ENCODE measurements at regions of chr17 and their contacts with region 1.

Region 1: DNA sequence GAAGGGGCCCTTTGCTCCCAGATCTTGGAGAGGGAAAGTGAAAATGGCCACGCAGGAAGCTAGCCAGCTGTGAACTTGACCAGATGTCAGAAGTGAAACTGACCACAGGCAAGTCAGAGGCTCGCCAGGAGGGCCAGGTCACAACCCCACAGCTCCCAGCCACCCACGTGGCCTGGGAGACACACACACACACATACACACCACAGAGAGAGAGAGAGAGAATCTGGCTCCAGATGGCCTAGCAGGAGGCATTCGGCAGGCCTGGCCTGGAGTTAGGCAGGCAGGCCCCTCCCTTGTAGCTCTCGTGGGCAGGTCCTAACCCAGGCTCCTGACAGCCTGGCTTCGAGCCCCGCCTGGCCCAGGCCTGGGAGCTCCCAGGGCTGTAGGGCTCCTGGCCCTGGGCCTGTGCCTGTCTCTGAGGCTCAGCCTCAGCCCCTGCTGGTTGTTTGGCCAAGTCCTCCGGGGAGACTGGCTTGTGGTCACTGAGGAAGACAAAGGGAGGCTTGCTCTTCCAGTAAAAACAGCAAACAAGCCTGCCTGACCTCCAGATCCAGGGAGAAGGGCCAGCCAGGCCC is 20.2 kb downstream of the NGFR start:
- DNase-seq: peak in 1 of 2 experiments; percentile 70
- H3K4me3 ChIP-seq: no peak overlapping the region
- H3K27ac ChIP-seq: no peak overlapping the region
- H3K4me1 ChIP-seq: peaks cover 16 to 41% (median 22%) of the 10 kb centered on the region in 4 experiments
- H3K27me3 ChIP-seq: no peaks in the 10 kb centered on the region
- CTCF ChIP-seq: no peak; a peak in 1 of 4 replicates
- EP300 ChIP-seq: no peak
- POLR2A ChIP-seq: no peak; a peak in 1 of 3 replicates
- RAD21 ChIP-seq: peak; percentile 7 to 33; a peak in 3 of 4 replicates

Region 2: GRCh38 chr17:49471089-49471683 is 44.1 kb before region 1 on chr17:
- CTCF ChIA-PET with region 1: interaction called, 16 read pairs
- POLR2A ChIA-PET with region 1: no interaction called
- DNase-seq: no peak
- H3K4me3 ChIP-seq: peak overlapping the region in 1 of 4 experiments; percentile 73; a peak in 3 of 8 replicates
- H3K27ac ChIP-seq: no peak overlapping the region
- H3K4me1 ChIP-seq: peaks cover 7 to 16% (median 12%) of the 10 kb centered on the region in 4 experiments
- H3K27me3 ChIP-seq: peaks cover 3 to 35% (median 34%) of the 10 kb centered on the region in 4 experiments
- CTCF ChIP-seq: peak in 1 of 3 experiments; percentile 2; a peak in 1 of 4 replicates
- EP300 ChIP-seq: no peak
- POLR2A ChIP-seq: no peak
- RAD21 ChIP-seq: no peak; a peak in 1 of 4 replicates

Region 3: DNA sequence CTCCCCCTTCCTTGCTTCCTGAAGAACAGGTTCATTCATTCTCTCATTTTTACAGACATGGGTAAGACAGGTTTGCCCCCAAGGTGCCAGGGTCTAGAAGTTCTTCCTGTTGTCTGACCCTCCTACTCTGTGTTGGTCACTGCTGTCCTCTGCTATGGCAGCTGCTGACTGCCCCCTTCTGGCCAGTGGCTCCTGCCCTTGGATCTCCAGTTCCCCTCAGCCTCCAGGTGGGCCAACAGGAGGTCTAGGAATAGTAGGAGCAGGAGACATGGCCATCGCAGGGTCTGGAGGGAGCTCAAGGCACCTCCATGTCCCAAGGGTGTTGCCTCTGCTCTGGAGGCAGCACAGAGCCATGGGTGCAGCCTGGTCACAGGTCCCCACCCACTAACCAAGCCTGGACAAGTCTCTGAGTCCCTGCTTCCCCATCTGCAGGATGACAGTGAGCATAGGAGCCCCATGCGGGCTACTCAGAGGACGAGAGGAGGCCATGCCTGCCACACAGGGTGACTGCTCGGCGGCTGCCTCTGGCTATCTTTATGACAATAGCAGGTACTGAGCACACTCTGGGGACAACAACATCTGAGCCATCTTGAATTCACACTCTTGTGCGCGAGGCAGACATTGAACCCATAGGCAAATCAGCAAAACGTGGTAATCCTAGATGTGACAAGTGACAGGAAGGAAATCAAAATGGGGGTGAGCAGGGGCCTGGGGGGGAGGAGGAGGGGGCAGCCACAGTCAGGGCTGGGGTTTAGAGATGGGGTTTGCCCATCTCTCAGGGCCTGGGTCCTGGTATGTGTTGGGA is 33.4 kb after region 1 on chr17:
- CTCF ChIA-PET with region 1: interaction called, 205 read pairs
- POLR2A ChIA-PET with region 1: interaction called, 3 read pairs
- DNase-seq: peak in 1 of 2 experiments; percentile 85
- H3K4me3 ChIP-seq: no peak overlapping the region
- H3K27ac ChIP-seq: no peak overlapping the region
- H3K4me1 ChIP-seq: peaks cover 0 to 26% (median 14%) of the 10 kb centered on the region in 4 experiments; a peak in 6 of 7 replicates
- H3K27me3 ChIP-seq: no peaks in the 10 kb centered on the region
- CTCF ChIP-seq: peak; percentile 93 to 96 (median 94)
- EP300 ChIP-seq: no peak
- POLR2A ChIP-seq: no peak
- RAD21 ChIP-seq: peak; percentile 91 to 95

Measured in H1 (cell line).